ENCODE measurements at regions of chr12 and their contacts with region 1.

Region 1: GRCh38 chr12:89721291-89721987 is 12.8 kb upstream of the ATP2B1 start:
- DNase-seq: no peak
- ATAC-seq: peak; percentile 86
- H3K4me3 Mint-ChIP-seq: peak overlapping the region; percentile 72
- H3K27ac Mint-ChIP-seq: peak overlapping the region; percentile 95
- H3K4me1 Mint-ChIP-seq: peaks cover 39% of the 10 kb centered on the region
- H3K27me3 Mint-ChIP-seq: no peaks in the 10 kb centered on the region
- CTCF ChIP-seq: no peak

Region 2: DNA sequence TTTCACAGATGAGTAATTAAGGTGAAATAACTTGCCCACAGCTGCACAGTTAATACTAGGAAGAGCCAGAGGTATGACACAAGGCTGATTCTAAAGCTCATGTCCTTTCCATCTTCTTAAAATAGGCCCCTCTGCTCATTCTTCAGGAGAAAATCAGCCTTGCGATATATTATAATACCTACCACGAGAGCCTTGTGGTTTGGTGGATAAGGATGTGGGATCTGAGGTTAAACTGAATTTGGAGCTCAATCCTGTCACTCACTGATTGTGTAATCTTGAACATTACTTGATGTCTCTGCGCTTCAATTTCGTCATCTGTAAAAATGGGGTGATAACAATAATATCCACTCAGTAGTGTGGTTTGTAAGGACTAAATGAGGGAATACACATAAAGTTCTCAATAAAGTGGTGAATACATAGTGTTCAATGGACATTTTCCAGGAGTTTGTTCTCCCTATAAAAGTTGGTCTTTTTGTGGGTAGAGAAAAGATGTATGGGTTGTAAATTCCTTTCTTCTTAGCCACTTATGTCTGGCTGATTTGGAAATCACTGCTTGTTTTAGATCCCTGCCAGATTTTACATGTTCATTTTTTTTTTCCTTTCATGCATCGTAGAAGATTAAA is 12.3 kb after region 1 on chr12:
- CTCF ChIA-PET with region 1: no interaction called
- POLR2A ChIA-PET with region 1: no interaction called
- intact Hi-C with region 1: loop called (anchors 2 kb)
- DNase-seq: no peak
- ATAC-seq: no peak
- H3K4me3 Mint-ChIP-seq: no peak overlapping the region
- H3K27ac Mint-ChIP-seq: no peak overlapping the region
- H3K4me1 Mint-ChIP-seq: peaks cover 15% of the 10 kb centered on the region
- H3K27me3 Mint-ChIP-seq: no peaks in the 10 kb centered on the region
- CTCF ChIP-seq: no peak

Region 3: GRCh38 chr12:89742337-89743022 is 21.0 kb after region 1 on chr12:
- CTCF ChIA-PET with region 1: no interaction called
- POLR2A ChIA-PET with region 1: no interaction called
- intact Hi-C with region 1: loop called (anchors 2 kb)
- DNase-seq: no peak
- ATAC-seq: peak; percentile 84
- H3K4me3 Mint-ChIP-seq: peak overlapping the region; percentile 47
- H3K27ac Mint-ChIP-seq: peak overlapping the region; percentile 91
- H3K4me1 Mint-ChIP-seq: peaks cover 19% of the 10 kb centered on the region
- H3K27me3 Mint-ChIP-seq: no peaks in the 10 kb centered on the region
- CTCF ChIP-seq: no peak

Region 4: DNA sequence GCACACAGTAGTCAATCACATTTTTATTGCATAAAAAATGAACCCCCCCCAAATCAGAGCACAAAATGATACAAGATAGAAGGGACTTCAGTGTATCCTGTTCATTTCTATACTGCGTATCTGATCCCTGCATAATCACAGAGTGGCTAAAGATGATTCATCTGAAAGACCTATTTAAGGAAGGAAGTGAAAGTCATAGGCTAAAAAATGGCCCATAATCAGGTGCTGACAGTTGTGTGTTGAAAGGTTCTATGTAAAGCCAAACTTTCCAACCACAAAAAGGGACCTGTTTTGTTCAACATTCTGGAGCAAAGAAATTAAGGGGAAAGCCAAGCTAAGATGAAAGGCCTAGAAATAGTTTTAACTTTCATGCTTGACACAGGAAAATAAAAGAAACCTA is 135.0 kb after region 1 on chr12:
- CTCF ChIA-PET with region 1: no interaction called
- POLR2A ChIA-PET with region 1: interaction called, 10 read pairs
- intact Hi-C with region 1: no loop called
- DNase-seq: no peak
- ATAC-seq: peak; percentile 86
- H3K4me3 Mint-ChIP-seq: peak overlapping the region; percentile 68
- H3K27ac Mint-ChIP-seq: peak overlapping the region; percentile 91
- H3K4me1 Mint-ChIP-seq: peaks cover 64% of the 10 kb centered on the region
- H3K27me3 Mint-ChIP-seq: no peaks in the 10 kb centered on the region
- CTCF ChIP-seq: no peak

Measured in activated B cell treated with CpG ODN at 0.5 μM for 24 hours (primary cell).